Natural killer cell (primary cell): ENCODE measurements at regions of chr7 and their contacts with region 1.

Region 1: GRCh38 chr7:17769918-17770317 is 170.4 kb downstream of the SNX13 start:
- DNase-seq: peak in 1 of 2 donors; percentile 68
- ATAC-seq: peak; percentile 40 to 65 (median 62)
- H3K4me3 ChIP-seq: no peak overlapping the region
- H3K4me3 Mint-ChIP-seq: no peak overlapping the region
- H3K27ac ChIP-seq: no peak overlapping the region
- H3K27ac Mint-ChIP-seq: no peak overlapping the region
- H3K4me1 ChIP-seq: no peaks in the 10 kb centered on the region
- H3K4me1 Mint-ChIP-seq: peaks cover 14 to 24% of the 10 kb centered on the region in 2 donors
- H3K27me3 ChIP-seq: no peaks in the 10 kb centered on the region
- H3K27me3 Mint-ChIP-seq: no peaks in the 10 kb centered on the region
- CTCF ChIP-seq: peak; percentile 54

Region 2: GRCh38 chr7:17802056-17802455 is 32.1 kb after region 1 on chr7:
- intact Hi-C with region 1: no loop called
- DNase-seq: no peak
- ATAC-seq: no peak
- H3K4me3 ChIP-seq: no peak overlapping the region
- H3K4me3 Mint-ChIP-seq: no peak overlapping the region
- H3K27ac ChIP-seq: no peak overlapping the region
- H3K27ac Mint-ChIP-seq: no peak overlapping the region
- H3K4me1 ChIP-seq: peaks cover under 1% of the 10 kb centered on the region
- H3K4me1 Mint-ChIP-seq: peaks cover 0 to under 1% of the 10 kb centered on the region in 2 donors
- H3K27me3 ChIP-seq: no peaks in the 10 kb centered on the region
- H3K27me3 Mint-ChIP-seq: no peaks in the 10 kb centered on the region
- CTCF ChIP-seq: no peak

Region 3: GRCh38 chr7:18345641-18346234 is 575.8 kb after region 1 on chr7:
- intact Hi-C with region 1: loop called (anchors 1 kb)
- DNase-seq: peak in 1 of 2 donors; percentile 62
- ATAC-seq: peak in 1 of 3 donors; percentile 53
- H3K4me3 ChIP-seq: no peak overlapping the region
- H3K4me3 Mint-ChIP-seq: no peak overlapping the region
- H3K27ac ChIP-seq: no peak overlapping the region
- H3K27ac Mint-ChIP-seq: no peak overlapping the region
- H3K4me1 ChIP-seq: no peaks in the 10 kb centered on the region
- H3K4me1 Mint-ChIP-seq: peaks cover 0 to 6% of the 10 kb centered on the region in 2 donors
- H3K27me3 ChIP-seq: no peaks in the 10 kb centered on the region
- H3K27me3 Mint-ChIP-seq: no peaks in the 10 kb centered on the region
- CTCF ChIP-seq: peak; percentile 72